ENCODE measurements at regions of chr20 and their contacts with region 1.

Region 1: GRCh38 chr20:58361481-58362205 is 27.4 kb upstream of the VAPB start:
- DNase-seq: no peak
- ATAC-seq: no peak; a peak in 1 of 6 replicates
- H3K4me3 ChIP-seq: no peak overlapping the region
- H3K27ac ChIP-seq: no peak overlapping the region
- H3K4me1 ChIP-seq: no peaks in the 10 kb centered on the region
- CTCF ChIP-seq: no peak
- EP300 ChIP-seq: no peak
- POLR2A ChIP-seq: no peak
- RAD21 ChIP-seq: no peak

Region 2: DNA sequence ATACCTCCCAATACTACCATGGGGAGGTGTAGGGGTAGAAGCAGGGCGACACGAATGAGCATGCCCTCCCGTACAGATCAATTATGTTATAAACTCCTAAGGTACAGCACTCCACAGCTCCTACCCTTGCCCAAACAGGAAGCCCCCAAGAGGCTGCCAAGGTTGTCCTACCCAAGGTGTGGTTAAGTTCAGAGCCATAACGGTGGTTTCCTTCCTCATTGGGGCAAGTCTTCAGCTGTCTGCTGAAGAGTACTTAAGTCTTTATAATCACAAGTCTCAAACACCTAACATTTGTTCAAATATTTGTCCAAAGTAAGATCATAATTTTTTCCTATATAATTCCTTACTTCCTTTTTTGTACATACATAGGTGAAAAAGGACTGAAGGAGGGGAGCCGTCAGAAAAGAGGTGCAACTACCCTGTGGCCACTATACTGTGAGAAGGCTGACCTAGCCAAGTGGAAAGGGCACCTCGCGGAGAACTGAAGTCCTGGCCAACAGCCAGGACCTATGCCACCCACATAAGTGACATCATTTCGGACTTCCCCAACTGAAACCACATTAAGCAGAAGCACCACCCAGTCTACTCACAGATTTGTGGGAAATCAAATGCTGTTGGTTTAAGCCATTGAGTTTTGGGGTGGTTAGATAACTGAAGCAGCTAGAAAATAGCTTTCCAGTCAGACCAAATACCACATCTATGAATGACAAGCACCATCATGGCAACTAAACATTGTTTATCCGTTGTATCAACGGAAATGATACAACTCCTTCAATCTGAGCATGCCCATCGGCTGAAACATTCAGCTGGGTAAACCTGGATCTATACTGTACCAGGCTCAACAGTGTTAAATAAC is 55.0 kb before region 1 on chr20:
- CTCF ChIA-PET with region 1: no interaction called
- POLR2A ChIA-PET with region 1: no interaction called
- DNase-seq: peak; percentile 10 to 30
- ATAC-seq: no peak
- H3K4me3 ChIP-seq: no peak overlapping the region
- H3K27ac ChIP-seq: no peak overlapping the region
- H3K4me1 ChIP-seq: peaks cover 16% of the 10 kb centered on the region
- CTCF ChIP-seq: no peak
- EP300 ChIP-seq: no peak
- POLR2A ChIP-seq: no peak
- RAD21 ChIP-seq: no peak

Region 3: GRCh38 chr20:58342104-58342960 is 19.3 kb before region 1 on chr20:
- CTCF ChIA-PET with region 1: interaction called, 10 read pairs
- POLR2A ChIA-PET with region 1: no interaction called
- DNase-seq: peak; percentile 29 to 56
- ATAC-seq: peak in 1 of 2 experiments; percentile 74; a peak in 3 of 6 replicates
- H3K4me3 ChIP-seq: no peak overlapping the region
- H3K27ac ChIP-seq: peak overlapping the region; percentile 61 to 75
- H3K4me1 ChIP-seq: peaks cover 45% of the 10 kb centered on the region
- CTCF ChIP-seq: no peak
- EP300 ChIP-seq: no peak
- POLR2A ChIP-seq: no peak
- RAD21 ChIP-seq: no peak

Measured in A549 (cell line).